Activated CD8-positive, alpha-beta T cell treated with anti-CD3 and anti-CD28 coated beads, Interleukin-2, amount 10 ng/mL, durations not matched to agents 7 days and 5 days (primary cell): ENCODE measurements at regions of chr17 and their contacts with region 1.

Region 1: GRCh38 chr17:60036796-60037612 is 41.7 kb downstream of the HEATR6 start:
- DNase-seq: peak; percentile 80
- ATAC-seq: peak; percentile 97
- H3K4me3 Mint-ChIP-seq: no peak overlapping the region
- H3K27ac Mint-ChIP-seq: no peak overlapping the region
- H3K4me1 Mint-ChIP-seq: peaks cover 9% of the 10 kb centered on the region
- H3K27me3 Mint-ChIP-seq: peaks cover 21% of the 10 kb centered on the region

Region 2: DNA sequence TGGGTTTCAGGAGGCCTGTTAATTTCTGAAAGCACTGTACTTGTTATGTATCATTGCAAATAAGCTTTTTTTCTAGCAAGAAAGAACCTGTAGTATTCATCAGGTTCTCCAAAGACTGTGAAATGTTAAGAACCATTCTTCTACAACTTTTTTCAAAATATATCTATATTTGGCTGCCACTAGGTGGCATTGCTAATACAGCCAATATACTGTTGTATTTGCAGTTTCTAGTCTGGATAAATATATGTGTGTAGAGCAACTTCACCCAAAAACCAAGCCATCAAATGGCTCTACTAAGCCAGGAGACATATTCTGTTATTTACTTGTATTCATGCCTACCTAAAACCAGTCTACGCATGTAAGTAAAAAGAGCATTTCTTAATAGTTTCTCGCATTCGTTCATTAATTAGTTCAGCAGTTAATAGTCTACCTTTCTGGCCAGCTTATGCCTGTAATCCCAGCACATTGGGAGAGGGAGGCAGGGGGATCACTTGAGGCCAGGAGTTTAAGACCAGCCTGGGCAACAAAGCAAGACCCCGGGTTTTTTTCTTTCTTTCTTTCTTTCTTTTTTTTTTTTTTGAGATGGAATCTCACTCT is 290.1 kb before region 1 on chr17:
- CTCF ChIA-PET with region 1: interaction called, 31 read pairs
- POLR2A ChIA-PET with region 1: no interaction called
- DNase-seq: no peak
- ATAC-seq: peak; percentile 71
- H3K4me3 Mint-ChIP-seq: no peak overlapping the region
- H3K27ac Mint-ChIP-seq: no peak overlapping the region
- H3K4me1 Mint-ChIP-seq: peaks cover 12% of the 10 kb centered on the region
- H3K27me3 Mint-ChIP-seq: no peaks in the 10 kb centered on the region

Region 3: DNA sequence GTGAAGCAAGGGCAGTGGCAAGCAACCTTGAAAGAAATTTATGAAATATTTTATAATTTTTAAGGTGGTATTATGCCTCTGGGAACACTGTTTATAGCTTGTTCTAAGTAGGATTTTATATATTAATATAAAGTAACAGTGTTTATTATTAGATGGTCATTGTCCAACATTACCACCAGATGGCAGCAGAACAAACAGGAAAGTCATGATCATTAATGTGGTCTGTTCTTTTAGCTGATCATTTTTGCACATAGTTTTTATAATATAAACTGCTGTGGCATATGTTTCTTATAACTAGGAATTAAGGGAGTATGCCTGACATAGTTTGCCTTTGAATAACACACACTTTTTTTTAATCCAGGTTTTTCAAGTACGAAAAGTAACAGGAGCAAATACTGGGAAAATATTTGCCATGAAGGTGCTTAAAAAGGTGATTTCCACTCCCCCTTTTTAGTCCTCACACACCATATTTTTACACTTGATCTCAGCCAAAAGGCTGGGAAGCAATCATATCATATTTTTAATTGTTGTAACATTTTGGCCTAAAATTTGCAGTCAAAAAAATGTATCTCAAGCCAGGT is 122.6 kb before region 1 on chr17:
- CTCF ChIA-PET with region 1: interaction called, 29 read pairs
- POLR2A ChIA-PET with region 1: no interaction called
- DNase-seq: peak; percentile 35
- ATAC-seq: peak; percentile 69
- H3K4me3 Mint-ChIP-seq: no peak overlapping the region
- H3K27ac Mint-ChIP-seq: no peak overlapping the region
- H3K4me1 Mint-ChIP-seq: no peaks in the 10 kb centered on the region
- H3K27me3 Mint-ChIP-seq: no peaks in the 10 kb centered on the region

Region 4: GRCh38 chr17:60006124-60006523 is 30.9 kb before region 1 on chr17:
- CTCF ChIA-PET with region 1: no interaction called
- POLR2A ChIA-PET with region 1: no interaction called
- DNase-seq: no peak
- ATAC-seq: no peak
- H3K4me3 Mint-ChIP-seq: no peak overlapping the region
- H3K27ac Mint-ChIP-seq: no peak overlapping the region
- H3K4me1 Mint-ChIP-seq: no peaks in the 10 kb centered on the region
- H3K27me3 Mint-ChIP-seq: peaks cover 4% of the 10 kb centered on the region

Region 5: GRCh38 chr17:60049936-60050335 is 12.9 kb after region 1 on chr17:
- CTCF ChIA-PET with region 1: interaction called, 36 read pairs
- POLR2A ChIA-PET with region 1: no interaction called
- DNase-seq: no peak
- ATAC-seq: no peak
- H3K4me3 Mint-ChIP-seq: no peak overlapping the region
- H3K27ac Mint-ChIP-seq: no peak overlapping the region
- H3K4me1 Mint-ChIP-seq: no peaks in the 10 kb centered on the region
- H3K27me3 Mint-ChIP-seq: no peaks in the 10 kb centered on the region

Region 6: GRCh38 chr17:60102632-60103096 is 65.7 kb after region 1 on chr17:
- CTCF ChIA-PET with region 1: no interaction called
- POLR2A ChIA-PET with region 1: no interaction called
- DNase-seq: peak; percentile 26
- ATAC-seq: peak; percentile 69
- H3K4me3 Mint-ChIP-seq: peak overlapping the region; percentile 60
- H3K27ac Mint-ChIP-seq: no peak overlapping the region
- H3K4me1 Mint-ChIP-seq: peaks cover 17% of the 10 kb centered on the region
- H3K27me3 Mint-ChIP-seq: peaks cover 44% of the 10 kb centered on the region

Region 7: GRCh38 chr17:60305141-60305540 is 268.1 kb after region 1 on chr17:
- CTCF ChIA-PET with region 1: no interaction called
- POLR2A ChIA-PET with region 1: no interaction called
- DNase-seq: peak; percentile 40
- ATAC-seq: peak; percentile 79
- H3K4me3 Mint-ChIP-seq: no peak overlapping the region
- H3K27ac Mint-ChIP-seq: no peak overlapping the region
- H3K4me1 Mint-ChIP-seq: peaks cover 18% of the 10 kb centered on the region
- H3K27me3 Mint-ChIP-seq: no peaks in the 10 kb centered on the region